GM13977 (cell line): ENCODE measurements at regions of chr2 and their contacts with region 1.

Region 1: GRCh38 chr2:72862239-72862988 is 24.8 kb upstream of the SPR start:
- DNase-seq: peak; percentile 84
- CTCF ChIP-seq: peak; percentile 99

Region 2: DNA sequence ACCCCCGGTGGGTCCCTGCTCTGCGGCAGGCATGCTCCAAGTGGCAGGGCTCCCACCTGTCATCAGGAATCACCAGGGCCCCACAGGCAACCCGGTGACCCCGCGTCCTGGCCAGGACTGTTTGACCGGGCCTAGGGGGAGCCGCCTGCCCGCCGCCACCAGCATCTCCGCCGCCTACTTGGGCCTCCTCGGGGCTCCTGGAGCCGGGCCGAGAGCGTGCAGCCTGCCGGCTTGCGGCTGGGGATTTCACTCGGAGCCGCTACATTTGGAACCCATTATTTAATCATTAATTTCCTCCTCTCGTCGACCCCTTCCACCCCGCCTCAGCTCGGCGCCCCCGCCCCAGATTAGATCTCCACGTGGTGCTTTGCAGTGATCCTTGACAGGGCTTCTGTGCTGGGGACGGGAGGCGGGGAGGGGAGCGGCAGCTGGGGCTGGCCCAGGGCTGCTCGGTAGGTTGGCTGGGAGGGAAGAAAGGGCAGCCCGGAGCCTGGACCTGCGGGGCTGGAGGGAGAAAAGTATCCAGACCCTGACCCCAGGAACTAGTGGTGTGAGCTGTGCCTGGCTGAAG is 1010.2 kb before region 1 on chr2:
- in situ Hi-C with region 1: no loop called
- DNase-seq: no peak
- CTCF ChIP-seq: no peak

Region 3: DNA sequence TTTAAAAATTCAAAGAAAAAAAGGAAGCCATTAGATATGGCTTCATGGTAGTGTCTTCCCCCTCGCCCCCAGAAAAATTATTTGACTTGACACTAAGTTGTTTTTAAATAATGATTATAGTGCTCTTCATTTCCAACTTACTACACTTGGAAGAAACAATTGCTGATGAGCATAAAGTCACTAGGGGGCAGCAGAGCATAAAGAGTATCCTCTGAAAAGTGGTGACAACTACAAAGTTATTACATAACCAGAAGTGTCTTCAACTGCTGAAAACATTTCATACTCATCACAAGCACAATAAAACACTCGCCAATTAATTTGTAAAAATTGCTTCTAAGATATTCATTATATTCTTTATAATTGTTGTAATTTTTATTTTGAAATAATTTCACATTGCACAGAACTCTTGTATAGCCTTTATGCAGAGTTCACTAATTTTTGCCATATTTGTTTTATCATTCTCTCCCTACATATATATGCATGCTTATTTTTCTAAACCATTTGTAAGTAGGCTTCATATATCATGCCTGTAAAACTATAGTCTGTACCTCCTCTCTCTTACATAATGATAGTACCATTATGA is 91.4 kb before region 1 on chr2:
- in situ Hi-C with region 1: loop called (anchors 5 kb)
- DNase-seq: peak; percentile 70
- CTCF ChIP-seq: peak; percentile 79

Region 4: GRCh38 chr2:73134471-73134870 is 272.1 kb after region 1 on chr2:
- in situ Hi-C with region 1: no loop called
- DNase-seq: no peak
- CTCF ChIP-seq: no peak

Region 5: DNA sequence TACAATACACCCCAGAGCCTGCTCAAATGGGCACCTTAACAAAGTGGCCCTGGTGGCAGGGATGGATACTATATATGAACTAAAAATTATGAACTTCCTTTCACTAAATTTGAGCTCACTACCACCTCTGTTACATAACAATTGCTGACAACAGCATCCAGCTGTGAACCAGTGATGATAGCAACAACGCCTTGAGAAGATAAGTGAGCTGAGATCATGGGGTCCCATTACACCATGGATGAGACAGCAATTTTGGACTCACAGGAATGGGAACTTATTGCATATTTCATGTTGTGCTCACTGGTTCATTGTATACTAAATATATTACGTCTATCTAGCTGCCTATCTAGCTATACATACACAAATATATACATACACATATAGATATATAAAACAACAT is 506.4 kb after region 1 on chr2:
- in situ Hi-C with region 1: no loop called
- DNase-seq: no peak
- CTCF ChIP-seq: no peak